ENCODE measurements at regions of chr11 and their contacts with region 1.

Region 1: DNA sequence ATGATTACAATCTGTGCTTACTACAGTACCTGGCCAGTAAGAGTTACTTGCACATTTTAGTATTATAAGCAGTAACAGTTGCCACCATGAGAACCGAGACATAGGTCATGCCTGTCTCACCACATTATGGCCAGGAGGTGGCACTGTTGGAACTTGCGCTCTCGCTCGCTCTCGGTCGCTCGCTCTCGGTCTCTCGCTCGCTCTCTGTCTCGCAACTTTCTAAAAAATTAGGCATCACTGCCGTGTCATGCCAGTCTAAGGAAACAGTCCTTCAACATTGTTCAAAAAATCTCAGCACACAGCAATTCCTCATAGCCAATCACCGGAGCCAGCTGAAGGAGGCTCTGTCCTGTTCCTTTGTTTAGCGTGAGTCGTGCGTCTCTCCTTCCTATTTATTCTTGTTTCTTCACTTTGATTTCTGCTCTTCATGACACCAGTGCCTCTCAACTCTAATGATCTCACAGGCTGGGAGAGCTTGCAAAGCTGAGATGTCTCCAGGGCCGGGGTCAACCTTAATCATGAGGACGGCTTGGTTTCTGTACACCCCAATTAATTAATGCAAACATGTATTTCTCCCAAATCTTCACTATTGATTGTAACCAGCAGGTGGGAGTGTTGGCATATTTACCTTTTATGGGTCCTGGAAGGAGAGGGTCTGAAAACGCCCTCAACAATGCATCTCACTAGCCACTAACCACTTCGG is 6.3 kb upstream of the ADAMTS8 start:
- DNase-seq: peak; percentile 62 to 78
- ATAC-seq: peak; percentile 86 to 94 (median 89)
- H3K4me3 ChIP-seq: peak overlapping the region; percentile 11 to 70 (median 60)
- H3K27ac ChIP-seq: peak overlapping the region in 9 of 10 donors; percentile 3 to 85 (median 76)
- H3K4me1 ChIP-seq: peaks cover 0 to 14% (median 12%) of the 10 kb centered on the region in 9 donors
- H3K27me3 ChIP-seq: peaks cover 0 to 14% (median 9%) of the 10 kb centered on the region in 7 donors
- CTCF ChIP-seq: peak; percentile 67 to 83 (median 76)

Region 2: GRCh38 chr11:130644187-130644586 is 209.5 kb after region 1 on chr11:
- intact Hi-C with region 1: loop called in 1 of 10 experiments (anchors 5 kb)
- DNase-seq: no peak
- ATAC-seq: no peak
- H3K4me3 ChIP-seq: no peak overlapping the region
- H3K27ac ChIP-seq: no peak overlapping the region
- H3K4me1 ChIP-seq: peaks cover 0 to 34% (median 16%) of the 10 kb centered on the region in 9 donors
- H3K27me3 ChIP-seq: no peaks in the 10 kb centered on the region
- CTCF ChIP-seq: no peak

Region 3: DNA sequence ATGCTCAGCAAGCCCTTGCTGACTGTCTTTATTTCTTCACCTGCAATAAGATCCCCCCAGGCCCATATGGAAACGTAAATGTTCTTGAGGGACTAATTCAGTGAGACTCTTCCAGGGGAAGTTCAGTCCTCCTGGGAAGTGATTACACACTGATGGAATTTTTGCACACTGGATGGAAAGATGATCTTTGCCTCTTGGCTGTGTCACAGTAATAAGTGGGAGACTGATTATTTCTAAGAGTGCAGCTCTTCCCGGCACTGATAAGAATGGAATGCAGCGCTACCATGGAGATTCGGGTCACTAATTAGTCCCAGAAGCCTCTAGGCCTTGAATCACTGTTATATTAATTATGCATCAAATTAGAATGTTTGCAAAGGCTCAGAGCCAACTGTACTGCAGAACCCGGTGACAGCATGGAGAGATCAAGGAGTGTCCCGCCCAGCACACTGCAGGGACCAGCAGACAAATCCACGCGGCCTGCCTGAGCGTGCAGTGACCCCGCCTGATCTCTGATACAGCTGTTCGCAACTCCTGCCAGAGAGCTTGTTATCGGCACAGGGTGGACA is 303.3 kb after region 1 on chr11:
- intact Hi-C with region 1: loop called in 1 of 10 experiments (anchors 5 kb)
- DNase-seq: peak; percentile 72 to 74
- ATAC-seq: peak; percentile 93 to 97 (median 96)
- H3K4me3 ChIP-seq: no peak overlapping the region
- H3K27ac ChIP-seq: peak overlapping the region; percentile 13 to 68 (median 58)
- H3K4me1 ChIP-seq: peaks cover 0 to 23% (median 21%) of the 10 kb centered on the region in 9 donors
- H3K27me3 ChIP-seq: no peaks in the 10 kb centered on the region
- CTCF ChIP-seq: no peak

Region 4: GRCh38 chr11:130861902-130862860 is 427.5 kb after region 1 on chr11:
- intact Hi-C with region 1: loop called (anchors 1 to 2 kb)
- DNase-seq: peak; percentile 89 to 91
- ATAC-seq: peak; percentile 50 to 79 (median 68)
- H3K4me3 ChIP-seq: peak overlapping the region in 1 of 10 donors; percentile 23
- H3K27ac ChIP-seq: peak overlapping the region in 3 of 10 donors; percentile 4 to 53 (median 51)
- H3K4me1 ChIP-seq: peaks cover 0 to 36% (median 16%) of the 10 kb centered on the region in 9 donors
- H3K27me3 ChIP-seq: no peaks in the 10 kb centered on the region
- CTCF ChIP-seq: peak; percentile 100